ENCODE measurements at regions of chr16 and their contacts with region 1.

Region 1: DNA sequence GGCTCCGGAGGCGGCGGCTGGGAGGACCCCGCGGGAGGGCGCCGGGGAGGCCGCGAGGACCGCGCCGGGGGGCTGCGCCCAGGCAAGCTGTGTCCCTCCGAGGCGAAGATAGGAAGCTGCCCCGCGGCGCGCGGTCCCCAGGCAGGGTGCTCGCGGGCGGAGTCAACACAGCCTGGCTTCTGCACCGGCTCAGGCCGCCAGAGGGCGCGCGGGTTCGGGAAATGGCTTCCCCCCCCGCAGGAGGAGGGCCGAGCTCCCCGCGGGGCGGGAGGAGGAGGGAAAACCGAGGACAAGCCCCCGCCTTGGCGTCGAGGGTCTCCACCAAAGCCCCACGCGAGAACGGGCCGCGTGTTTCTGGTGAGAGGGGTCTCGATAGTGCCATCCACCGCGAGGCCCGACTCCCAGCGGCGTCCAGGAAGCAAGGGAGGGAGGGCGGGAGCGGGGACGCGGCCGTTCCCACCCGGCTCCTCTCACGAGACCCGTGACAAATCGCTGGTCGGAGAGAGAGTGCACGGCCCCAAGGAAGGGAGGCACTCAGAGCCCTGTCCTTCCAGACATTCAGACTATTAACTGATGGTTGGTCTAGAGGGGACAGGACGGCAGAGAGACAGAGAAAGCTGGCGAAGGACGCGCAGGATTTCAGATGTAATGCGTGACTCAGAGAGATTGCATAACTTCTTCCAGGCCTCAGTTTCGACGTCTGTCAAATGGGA is 64.4 kb upstream of the DNAJA2 start:
- DNase-seq: peak; percentile 87 to 91
- ATAC-seq: peak; percentile 96 to 99 (median 99)
- H3K4me3 ChIP-seq: peak overlapping the region; percentile 36
- H3K4me3 Mint-ChIP-seq: peak overlapping the region; percentile 74
- H3K27ac ChIP-seq: no peak overlapping the region
- H3K27ac Mint-ChIP-seq: no peak overlapping the region
- H3K4me1 ChIP-seq: peaks cover 12% of the 10 kb centered on the region
- H3K4me1 Mint-ChIP-seq: peaks cover 6 to 11% of the 10 kb centered on the region in 2 donors
- H3K27me3 ChIP-seq: peaks cover 22% of the 10 kb centered on the region
- H3K27me3 Mint-ChIP-seq: peaks cover 42 to 58% of the 10 kb centered on the region in 2 donors
- CTCF ChIP-seq: peak; percentile 98

Region 2: DNA sequence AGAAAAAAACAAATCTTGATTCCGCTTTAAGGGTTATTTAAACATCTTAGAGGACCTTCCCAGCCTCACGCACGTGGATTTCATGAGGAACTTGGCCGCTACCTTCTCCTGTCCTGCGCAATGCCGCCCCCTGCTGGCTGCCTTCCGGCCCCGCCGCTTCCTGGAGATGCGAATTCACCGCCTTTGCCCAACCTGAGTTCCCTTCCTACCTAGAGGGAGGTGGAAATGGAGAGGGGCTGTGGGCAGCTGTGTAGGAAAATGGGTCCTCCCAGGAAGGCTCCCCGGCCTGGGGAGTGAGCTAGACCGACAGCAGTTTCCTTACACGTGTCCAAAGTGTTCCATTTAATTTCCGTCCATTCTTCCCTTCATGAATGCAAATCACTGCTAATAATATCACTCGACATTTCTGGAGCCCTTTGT is 1118.9 kb after region 1 on chr16:
- intact Hi-C with region 1: loop called (anchors 2 kb)
- DNase-seq: peak; percentile 70 to 83
- ATAC-seq: peak; percentile 47 to 78 (median 71)
- H3K4me3 ChIP-seq: no peak overlapping the region
- H3K4me3 Mint-ChIP-seq: no peak overlapping the region
- H3K27ac ChIP-seq: no peak overlapping the region
- H3K27ac Mint-ChIP-seq: no peak overlapping the region
- H3K4me1 ChIP-seq: peaks cover 6% of the 10 kb centered on the region
- H3K4me1 Mint-ChIP-seq: no peaks in the 10 kb centered on the region
- H3K27me3 ChIP-seq: peaks cover 5% of the 10 kb centered on the region
- H3K27me3 Mint-ChIP-seq: peaks cover 12 to 38% of the 10 kb centered on the region in 2 donors
- CTCF ChIP-seq: peak; percentile 87